ENCODE measurements at regions of chr3 and their contacts with region 1.

Region 1: DNA sequence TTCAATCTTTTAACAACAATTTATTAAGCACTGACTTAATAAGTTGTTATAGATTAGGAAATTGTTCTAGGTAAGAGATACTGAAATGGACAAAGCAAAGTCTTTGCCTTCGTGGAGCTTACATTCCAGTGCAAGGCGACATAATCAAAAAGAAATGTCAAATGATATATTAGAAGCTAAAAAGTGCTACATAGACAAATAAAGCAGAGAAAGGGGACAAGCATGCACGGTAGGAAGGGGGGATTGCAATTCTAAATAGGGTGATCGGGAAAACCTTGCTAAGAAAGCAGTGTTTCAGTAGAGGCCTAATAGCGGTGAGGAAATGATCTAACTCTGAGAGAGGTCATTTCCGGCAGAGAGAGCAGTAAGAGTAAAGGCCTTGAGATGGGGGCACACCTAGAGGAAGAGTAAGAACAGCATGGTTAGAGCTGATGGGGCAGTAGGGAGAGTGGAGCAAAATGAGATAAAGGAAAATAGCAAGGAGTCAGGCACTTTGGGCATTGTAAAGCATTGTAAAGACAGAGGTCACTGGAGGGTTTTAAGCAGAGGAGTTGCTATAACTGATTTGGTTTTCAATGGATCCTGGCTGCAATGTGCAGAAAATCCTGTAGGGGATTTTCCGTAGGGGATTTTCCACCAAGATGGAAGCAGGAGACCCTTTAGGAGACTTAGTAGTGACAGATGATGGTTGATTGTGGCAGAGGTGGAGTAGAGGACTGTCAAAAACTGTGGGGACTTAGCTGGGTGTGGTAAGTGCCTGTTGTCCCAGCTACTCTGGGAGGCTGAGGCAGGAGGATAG is 71.7 kb upstream of the CFAP20DC start:
- DNase-seq: no peak
- H3K4me3 ChIP-seq: no peak overlapping the region
- H3K27ac ChIP-seq: no peak overlapping the region
- H3K4me1 ChIP-seq: no peaks in the 10 kb centered on the region
- CTCF ChIP-seq: no peak

Region 2: DNA sequence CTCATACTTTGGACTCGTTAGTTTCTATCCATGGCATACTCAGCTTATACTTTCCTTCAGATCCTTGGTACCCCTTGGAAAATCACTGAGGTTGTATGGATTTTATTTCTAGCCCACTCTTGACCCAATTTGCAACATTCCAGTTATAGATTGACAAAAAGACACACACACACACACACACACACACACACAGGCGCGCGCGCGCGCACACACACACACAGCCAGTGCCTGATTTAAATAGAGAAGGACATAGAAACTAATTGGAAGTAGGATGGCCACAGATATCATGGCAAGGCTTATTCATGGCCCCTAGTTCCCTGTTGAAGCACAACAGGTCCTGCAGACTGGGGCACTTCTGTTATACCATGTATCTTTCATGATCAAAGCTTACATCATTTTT is 17.4 kb after region 1 on chr3:
- CTCF ChIA-PET with region 1: no interaction called
- POLR2A ChIA-PET with region 1: interaction called, 4 read pairs
- intact Hi-C with region 1: loop called (anchors 1 kb)
- DNase-seq: no peak
- H3K4me3 ChIP-seq: no peak overlapping the region
- H3K27ac ChIP-seq: no peak overlapping the region
- H3K4me1 ChIP-seq: no peaks in the 10 kb centered on the region
- CTCF ChIP-seq: no peak

Measured in OCI-LY7 (cell line).